Posterior vena cava (tissue), 2 donors: ENCODE measurements at regions of chr12 and their contacts with region 1.

Region 1: DNA sequence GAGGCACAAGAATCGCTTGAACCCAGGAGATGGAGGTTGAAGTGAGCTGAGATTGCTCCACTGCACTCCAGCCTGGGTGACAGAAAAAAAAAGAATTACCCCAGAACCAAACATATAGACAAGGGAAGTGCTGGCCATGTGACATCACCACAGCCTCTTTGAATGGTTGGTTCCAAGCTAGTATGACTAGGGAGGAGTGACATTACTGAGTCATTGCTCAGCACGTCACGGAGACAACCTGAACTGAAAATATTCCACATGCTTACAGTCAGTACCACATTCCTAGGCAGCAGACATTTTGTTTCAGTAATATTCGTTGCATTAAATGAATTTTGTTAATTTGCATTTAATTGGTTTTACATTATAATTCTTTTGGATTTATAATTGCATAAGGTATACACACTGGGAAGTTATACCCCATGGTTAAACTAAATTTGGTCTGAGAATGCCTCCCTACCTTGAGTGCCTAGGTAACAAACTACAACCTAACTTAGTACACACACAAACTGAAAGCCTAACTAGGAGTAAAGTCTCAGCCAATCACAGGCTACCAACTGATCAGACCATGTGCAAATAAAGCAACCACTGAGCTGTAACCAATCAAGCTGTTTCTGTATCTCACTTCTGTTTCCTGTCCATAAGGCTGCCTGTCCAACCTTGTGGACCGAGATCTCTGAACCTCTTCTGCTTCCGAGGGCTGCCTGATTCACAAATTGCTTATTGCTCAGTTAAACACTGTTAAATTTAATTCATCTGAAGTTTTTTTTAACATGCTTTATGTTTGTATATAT is 164.4 kb downstream of the CAND1 start:
- DNase-seq: no peak

Region 2: GRCh38 chr12:67355578-67356379 is 77.8 kb before region 1 on chr12:
- intact Hi-C with region 1: loop called in 1 of 2 experiments (anchors 5 kb)
- DNase-seq: no peak

Region 3: DNA sequence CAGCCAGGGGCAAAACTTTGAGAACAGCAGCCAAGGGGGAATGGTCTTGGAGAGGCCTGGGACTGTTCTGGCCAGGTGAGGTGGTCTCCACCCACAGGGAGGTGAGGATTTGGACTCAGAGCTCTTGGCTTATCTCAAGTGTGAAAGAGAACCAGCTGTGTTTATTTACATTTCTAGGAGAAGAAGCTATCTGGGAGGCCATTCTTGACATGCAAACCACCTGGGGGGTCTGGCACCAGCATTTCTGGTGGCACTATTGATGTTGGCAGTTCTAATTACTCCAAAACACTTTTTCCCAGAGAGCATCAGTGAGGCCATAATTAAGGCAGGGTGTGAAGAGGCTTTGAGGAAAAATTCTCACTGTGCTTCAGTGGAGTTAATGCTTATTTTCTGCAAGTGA is 69.4 kb before region 1 on chr12:
- intact Hi-C with region 1: loop called (anchors 2 to 5 kb)
- DNase-seq: no peak

Region 4: DNA sequence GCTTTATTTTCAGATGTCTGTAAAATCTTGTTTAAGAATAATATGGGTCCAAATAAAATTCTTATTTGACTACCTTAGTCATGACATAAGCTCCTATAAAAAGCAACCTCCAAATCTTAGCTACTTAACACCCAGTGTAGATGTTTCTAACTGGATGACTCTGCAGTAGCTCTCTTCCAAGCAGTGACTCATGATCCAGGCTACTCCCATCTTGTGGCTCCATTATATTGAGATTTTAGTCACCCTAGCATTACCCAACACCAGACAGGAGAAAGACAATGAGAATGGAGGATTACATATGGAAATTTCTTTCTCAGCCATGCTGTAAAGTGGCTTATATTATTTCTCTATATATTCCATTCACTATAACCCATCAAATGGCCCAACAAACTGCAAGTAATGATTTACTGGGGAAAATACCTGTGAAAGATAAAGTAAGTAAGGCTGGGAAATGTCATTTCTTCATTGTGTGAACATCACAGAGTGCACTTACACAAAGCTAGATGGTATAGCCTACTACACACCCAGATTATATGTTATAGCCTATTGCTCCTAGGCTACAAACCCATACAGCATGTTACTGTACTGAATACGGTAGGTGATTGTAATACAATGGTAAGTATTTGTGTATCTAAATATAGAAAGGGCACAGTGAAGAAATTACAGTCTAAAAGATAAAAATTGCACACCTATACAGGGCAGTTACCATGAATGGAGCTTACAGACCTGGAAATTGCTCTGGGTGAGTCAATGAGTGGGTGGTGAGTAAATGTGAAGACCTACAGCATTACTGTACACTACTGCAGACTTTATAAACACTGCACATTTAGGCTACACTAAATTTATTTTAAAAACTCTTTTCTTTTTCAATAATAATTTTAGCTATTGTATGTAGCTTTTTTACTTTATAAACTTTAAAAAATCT is 378.1 kb after region 1 on chr12:
- intact Hi-C with region 1: no loop called
- DNase-seq: no peak

Region 5: DNA sequence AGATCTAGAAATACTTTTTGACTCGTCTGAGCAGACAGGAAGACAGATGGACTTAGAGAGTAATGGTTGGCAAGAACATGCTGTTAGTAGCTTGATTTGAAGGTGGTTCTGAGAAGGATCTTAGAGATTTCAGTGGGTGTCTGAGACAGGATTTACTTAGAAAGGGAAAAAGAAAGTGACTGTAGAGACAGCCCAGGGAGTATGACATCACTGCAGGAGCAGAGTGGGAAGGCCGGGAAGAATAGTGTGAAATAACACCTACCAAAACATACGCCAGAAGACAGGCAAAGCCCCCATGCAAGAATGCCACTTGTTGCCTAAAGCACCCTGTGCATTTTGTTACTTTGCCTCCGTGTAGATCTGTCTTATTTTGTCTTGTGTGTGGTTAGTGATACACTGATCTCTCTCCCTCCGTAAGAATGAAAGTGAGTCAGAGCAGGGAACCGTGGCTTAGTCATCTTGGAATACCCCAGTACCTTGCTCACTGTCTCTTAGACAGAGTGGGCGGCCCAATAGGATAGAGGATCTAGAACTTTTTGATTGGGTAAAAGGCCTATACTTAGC is 394.3 kb after region 1 on chr12:
- intact Hi-C with region 1: loop called in 1 of 2 experiments (anchors 5 kb)
- DNase-seq: no peak